ENCODE measurements at regions of chr19 and their contacts with region 1.

Region 1: GRCh38 chr19:16088351-16089009 is 12.2 kb downstream of the TPM4 start:
- DNase-seq: peak in 1 of 10 donors; percentile 8
- ATAC-seq: no peak
- H3K4me3 Mint-ChIP-seq: peak overlapping the region in 2 of 10 donors; percentile 18 to 40
- H3K27ac Mint-ChIP-seq: peak overlapping the region in 6 of 10 donors; percentile 32 to 71 (median 62)
- H3K4me1 Mint-ChIP-seq: peaks cover 12 to 53% (median 34%) of the 10 kb centered on the region in 4 donors
- H3K27me3 Mint-ChIP-seq: no peaks in the 10 kb centered on the region

Region 2: DNA sequence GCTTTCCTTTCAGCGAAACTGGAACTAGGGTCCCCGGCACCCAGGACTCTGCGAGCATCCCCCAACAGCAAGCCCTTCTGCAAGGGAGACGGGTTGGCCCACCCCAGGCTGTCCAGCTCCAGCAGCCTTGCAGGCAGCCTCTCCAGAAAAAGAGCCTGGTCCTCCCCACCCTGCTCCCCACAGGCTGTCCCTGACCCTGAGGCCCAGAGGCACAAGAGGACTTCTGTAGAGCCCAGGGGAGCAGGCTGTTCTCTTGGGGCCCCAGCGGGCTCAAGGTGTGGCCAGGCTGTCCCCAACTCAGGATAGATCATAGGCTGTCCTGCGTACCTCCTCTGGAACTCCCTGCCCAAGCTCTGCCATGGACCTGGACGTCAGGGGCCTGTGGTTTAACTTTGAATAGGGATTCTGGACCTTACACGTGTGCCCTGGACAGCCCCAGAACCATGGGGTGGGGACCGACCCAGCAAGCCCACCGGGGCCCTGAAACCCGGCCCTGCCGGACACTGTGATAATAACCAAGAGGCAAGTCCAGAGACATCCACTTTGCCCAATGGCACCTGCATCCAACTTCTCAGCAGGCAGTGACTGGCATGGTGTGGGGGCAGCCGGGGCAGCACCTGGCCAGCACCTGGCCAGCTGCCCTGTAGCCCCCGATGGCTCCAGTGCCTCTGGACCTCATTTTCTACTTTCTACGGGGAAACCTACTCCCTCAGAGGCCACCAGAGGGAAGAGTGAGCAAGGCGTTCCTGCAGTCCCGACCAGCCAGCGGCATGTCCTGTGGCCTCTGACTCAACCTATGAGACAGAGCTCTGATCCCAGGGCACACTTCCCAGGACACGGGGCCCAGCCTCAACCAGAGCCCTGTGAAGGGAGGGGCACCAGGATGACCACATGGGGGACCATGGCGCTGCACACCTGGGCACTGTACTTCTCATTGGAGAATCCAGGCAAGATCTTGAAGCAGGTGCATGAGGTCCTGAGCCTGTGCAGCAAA is 63.1 kb before region 1 on chr19:
- POLR2A ChIA-PET with region 1: no interaction called
- DNase-seq: no peak
- ATAC-seq: no peak
- H3K4me3 Mint-ChIP-seq: no peak overlapping the region
- H3K27ac Mint-ChIP-seq: no peak overlapping the region
- H3K4me1 Mint-ChIP-seq: peaks cover 0 to 2% (median 0%) of the 10 kb centered on the region in 4 donors
- H3K27me3 Mint-ChIP-seq: no peaks in the 10 kb centered on the region

Region 3: DNA sequence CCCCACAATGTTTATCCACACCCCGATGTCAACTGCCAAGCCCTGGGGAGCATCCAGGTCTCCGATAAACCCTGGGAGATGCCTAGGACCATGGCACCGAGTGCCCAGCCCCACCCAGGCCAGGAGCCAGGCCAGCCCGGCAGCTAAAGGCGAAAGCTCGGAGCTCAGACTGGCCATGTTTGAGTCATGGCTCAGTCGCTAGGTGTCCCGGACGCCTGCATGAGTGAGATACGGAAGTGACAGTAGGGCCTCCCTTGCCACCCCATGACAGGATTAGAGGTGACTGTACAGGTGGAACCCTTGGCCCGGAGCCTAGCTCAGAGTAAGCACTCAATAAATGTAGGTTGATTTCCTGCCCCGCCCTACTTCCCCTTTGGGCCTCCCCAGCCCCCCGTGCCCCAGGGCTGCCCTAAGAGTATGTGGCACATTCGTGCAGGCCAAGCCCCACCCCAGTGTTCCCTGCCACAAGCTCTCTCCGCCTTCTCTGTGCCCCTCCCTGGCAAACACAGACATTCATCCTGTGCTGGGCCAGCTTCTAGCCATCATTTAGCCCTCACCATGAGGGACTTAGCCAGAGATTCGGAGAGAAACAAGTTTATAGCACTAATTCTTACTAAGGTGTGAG is 18.0 kb before region 1 on chr19:
- POLR2A ChIA-PET with region 1: interaction called, 61 read pairs
- DNase-seq: peak; percentile 67 to 97 (median 86)
- ATAC-seq: peak; percentile 91 to 94
- H3K4me3 Mint-ChIP-seq: peak overlapping the region in 4 of 10 donors; percentile 70 to 79 (median 78)
- H3K27ac Mint-ChIP-seq: no peak overlapping the region
- H3K4me1 Mint-ChIP-seq: peaks cover 25 to 41% (median 33%) of the 10 kb centered on the region in 4 donors
- H3K27me3 Mint-ChIP-seq: no peaks in the 10 kb centered on the region

Region 4: GRCh38 chr19:16076154-16076957 is 12.1 kb before region 1 on chr19 and contains the start of gene TPM4:
- POLR2A ChIA-PET with region 1: interaction called, 61 read pairs
- DNase-seq: peak; percentile 53 to 86 (median 68)
- ATAC-seq: peak; percentile 35 to 43
- H3K4me3 Mint-ChIP-seq: peak within 1 kb of the TSS; percentile 79 to 93 (median 86)
- H3K27ac Mint-ChIP-seq: peak within 1 kb of the TSS; percentile 90 to 98 (median 96)
- H3K4me1 Mint-ChIP-seq: peaks cover 32 to 78% (median 70%) of the 10 kb centered on the region in 4 donors
- H3K27me3 Mint-ChIP-seq: no peaks in the 10 kb centered on the region
- polyA plus RNA-seq, gene TPM4: 27.4 to 30.8 (median 29.3) TPM